Caco-2 (cell line): ENCODE measurements at regions of chr5 and their contacts with region 1.

Region 1: GRCh38 chr5:145500710-145501109 is 334.4 kb downstream of the PRELID2 start:
- DNase-seq: peak in 1 of 2 experiments; percentile 57
- H3K4me3 ChIP-seq: no peak overlapping the region
- H3K4me3 Mint-ChIP-seq: no peak overlapping the region
- H3K27ac Mint-ChIP-seq: no peak overlapping the region
- H3K4me1 ChIP-seq: no peaks in the 10 kb centered on the region
- H3K4me1 Mint-ChIP-seq: no peaks in the 10 kb centered on the region
- H3K27me3 ChIP-seq: no peaks in the 10 kb centered on the region
- H3K27me3 Mint-ChIP-seq: no peaks in the 10 kb centered on the region
- CTCF ChIP-seq: no peak

Region 2: GRCh38 chr5:145521066-145521465 is 20.4 kb after region 1 on chr5:
- CTCF ChIA-PET with region 1: no interaction called
- POLR2A ChIA-PET with region 1: no interaction called
- intact Hi-C with region 1: loop called (anchors 1 kb)
- DNase-seq: no peak
- H3K4me3 ChIP-seq: no peak overlapping the region
- H3K4me3 Mint-ChIP-seq: no peak overlapping the region
- H3K27ac Mint-ChIP-seq: no peak overlapping the region
- H3K4me1 ChIP-seq: no peaks in the 10 kb centered on the region
- H3K4me1 Mint-ChIP-seq: no peaks in the 10 kb centered on the region
- H3K27me3 ChIP-seq: no peaks in the 10 kb centered on the region
- H3K27me3 Mint-ChIP-seq: no peaks in the 10 kb centered on the region
- CTCF ChIP-seq: no peak